ENCODE measurements at regions of chr11 and their contacts with region 1.

Region 1: GRCh38 chr11:46845740-46846509 is at the start of gene CKAP5:
- DNase-seq: peak; percentile 97
- H3K4me3 Mint-ChIP-seq: peak within 1 kb of the TSS; percentile 88
- H3K27ac Mint-ChIP-seq: peak within 1 kb of the TSS; percentile 97
- H3K4me1 Mint-ChIP-seq: peaks cover 35% of the 10 kb centered on the region
- H3K27me3 Mint-ChIP-seq: no peaks in the 10 kb centered on the region
- total RNA-seq, gene CKAP5: 124 and 133 TPM in 2 replicates

Region 2: GRCh38 chr11:46826310-46827044 is 19.4 kb before region 1 on chr11:
- intact Hi-C with region 1: loop called (anchors 1 kb)
- DNase-seq: peak; percentile 93
- H3K4me3 Mint-ChIP-seq: peak overlapping the region; percentile 78
- H3K27ac Mint-ChIP-seq: no peak overlapping the region
- H3K4me1 Mint-ChIP-seq: peaks cover 24% of the 10 kb centered on the region
- H3K27me3 Mint-ChIP-seq: no peaks in the 10 kb centered on the region

Region 3: DNA sequence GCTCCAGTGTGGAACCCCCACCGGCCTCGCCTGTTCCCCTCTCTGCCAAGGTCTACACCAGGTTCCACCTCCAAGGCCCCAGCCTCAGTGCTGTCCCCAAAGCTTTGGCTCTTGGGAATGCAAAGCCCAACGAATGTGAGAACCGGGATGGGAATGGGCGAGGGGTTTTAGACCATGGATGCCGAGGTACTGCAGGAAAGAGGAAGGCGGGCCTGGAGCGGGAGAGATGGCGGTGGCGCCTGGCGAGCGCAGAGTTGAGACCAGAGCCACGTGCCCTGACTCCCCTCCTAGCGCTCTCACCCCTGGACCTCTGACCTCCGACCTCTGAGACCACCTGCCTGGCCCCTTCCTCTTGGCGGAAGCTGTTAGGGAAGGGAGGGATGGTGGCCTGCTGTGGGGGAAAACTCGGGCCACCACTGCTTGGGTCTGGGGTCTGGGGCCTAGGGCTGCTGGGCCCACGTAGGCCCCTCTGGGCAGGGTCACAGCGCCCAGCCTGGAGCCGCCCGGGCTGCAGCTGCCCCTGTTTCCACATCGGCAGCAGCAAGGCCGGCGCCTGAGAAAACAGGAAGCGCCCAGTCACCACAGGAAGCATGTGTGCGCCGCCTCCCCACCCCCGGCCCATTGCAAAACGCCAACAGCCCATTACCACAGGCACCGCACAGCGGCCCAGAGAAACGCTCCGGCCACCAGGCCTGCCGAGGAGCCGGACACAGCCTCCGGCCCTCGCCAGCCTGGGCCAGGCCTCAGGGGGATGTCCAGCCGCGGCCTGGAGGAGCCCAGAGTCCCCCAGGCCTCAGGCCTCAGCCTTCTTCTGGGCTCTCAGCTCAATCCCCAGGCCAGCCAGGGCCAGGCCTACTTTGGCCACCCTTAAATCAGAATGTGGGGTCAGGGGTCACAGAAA is 548.6 kb after region 1 on chr11:
- intact Hi-C with region 1: no loop called
- DNase-seq: peak; percentile 88
- H3K4me3 Mint-ChIP-seq: peak overlapping the region; percentile 63
- H3K27ac Mint-ChIP-seq: peak overlapping the region; percentile 93
- H3K4me1 Mint-ChIP-seq: peaks cover 21% of the 10 kb centered on the region
- H3K27me3 Mint-ChIP-seq: no peaks in the 10 kb centered on the region

Measured in activated CD4-positive, alpha-beta T cell treated with anti-CD3 and anti-CD28 coated beads, Interleukin-2, amount 10 ng/mL, durations not matched to agents 24 days and 14 days (primary cell).